AG04449 (cell line): ENCODE measurements at regions of chr7 and their contacts with region 1.

Region 1: GRCh38 chr7:30510124-30511075 is 5.8 kb upstream of the GGCT start:
- DNase-seq: no peak
- H3K4me3 ChIP-seq: no peak overlapping the region
- CTCF ChIP-seq: peak; percentile 58

Region 2: DNA sequence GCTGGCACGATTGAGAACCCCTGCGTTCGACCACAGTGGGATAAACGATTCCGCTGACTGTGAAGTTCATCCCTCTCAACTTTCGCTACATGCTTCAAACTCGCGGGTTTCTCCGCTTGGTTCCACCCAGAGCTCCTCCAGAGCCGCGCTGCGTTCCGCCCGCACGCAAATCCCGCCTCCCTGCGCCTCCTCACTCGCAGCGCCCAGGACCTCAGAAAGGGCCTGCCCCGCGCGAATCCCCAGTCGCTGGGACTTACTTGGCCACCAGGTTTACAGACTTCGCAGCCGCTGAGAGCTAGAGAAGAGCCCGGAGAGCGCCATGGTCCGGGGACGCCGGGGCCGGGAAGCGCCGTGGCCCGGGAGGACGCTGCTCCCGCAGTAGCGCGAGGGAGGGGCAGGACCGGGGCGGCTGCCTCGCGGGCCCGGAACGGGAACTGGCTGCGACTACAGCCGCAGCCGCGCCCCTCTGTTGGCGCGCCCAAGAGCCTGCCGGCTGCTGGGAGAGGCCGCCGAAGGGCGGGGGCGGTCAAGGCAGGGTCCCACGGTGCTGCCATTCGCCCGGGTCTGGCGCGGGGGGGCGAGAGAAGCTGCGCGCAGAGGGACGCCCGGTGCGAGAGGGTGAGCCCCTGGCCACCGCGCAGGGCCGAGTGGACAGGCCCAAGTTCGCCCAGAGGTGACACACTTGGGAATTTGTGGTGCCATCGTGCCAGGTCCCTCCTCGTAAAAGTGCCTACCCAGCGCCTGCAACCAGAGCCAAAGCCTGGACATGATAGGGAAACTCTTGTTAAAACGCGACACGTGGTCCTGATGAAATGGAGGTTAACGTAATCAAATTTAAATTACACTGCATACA is 31.8 kb before region 1 on chr7 and contains the start of gene NOD1:
- CTCF ChIA-PET with region 1: interaction called, 18 read pairs
- POLR2A ChIA-PET with region 1: no interaction called
- DNase-seq: no peak
- H3K4me3 ChIP-seq: peak within 1 kb of the TSS; percentile 74
- CTCF ChIP-seq: no peak

Region 3: GRCh38 chr7:30521532-30521931 is 11.1 kb after region 1 on chr7:
- CTCF ChIA-PET with region 1: interaction called, 49 read pairs
- POLR2A ChIA-PET with region 1: no interaction called
- DNase-seq: peak; percentile 17
- H3K4me3 ChIP-seq: no peak overlapping the region
- CTCF ChIP-seq: no peak